K562 (cell line): ENCODE measurements at regions of chr1 and their contacts with region 1.

Region 1: GRCh38 chr1:228275739-228276421 is 68.0 kb downstream of the OBSCN start:
- DNase-seq: peak; percentile 96 to 98 (median 98)
- ATAC-seq: peak; percentile 93
- H3K4me3 ChIP-seq: peak overlapping the region; percentile 54
- H3K27ac ChIP-seq: peak overlapping the region; percentile 57
- H3K4me1 ChIP-seq: peaks cover 5 to 80% of the 10 kb centered on the region in 2 experiments; a peak in 3 of 5 replicates
- H3K27me3 ChIP-seq: no peaks in the 10 kb centered on the region
- CTCF ChIP-seq: no peak
- EP300 ChIP-seq: no peak
- POLR2A ChIP-seq: peak; percentile 80
- RAD21 ChIP-seq: no peak

Region 2: DNA sequence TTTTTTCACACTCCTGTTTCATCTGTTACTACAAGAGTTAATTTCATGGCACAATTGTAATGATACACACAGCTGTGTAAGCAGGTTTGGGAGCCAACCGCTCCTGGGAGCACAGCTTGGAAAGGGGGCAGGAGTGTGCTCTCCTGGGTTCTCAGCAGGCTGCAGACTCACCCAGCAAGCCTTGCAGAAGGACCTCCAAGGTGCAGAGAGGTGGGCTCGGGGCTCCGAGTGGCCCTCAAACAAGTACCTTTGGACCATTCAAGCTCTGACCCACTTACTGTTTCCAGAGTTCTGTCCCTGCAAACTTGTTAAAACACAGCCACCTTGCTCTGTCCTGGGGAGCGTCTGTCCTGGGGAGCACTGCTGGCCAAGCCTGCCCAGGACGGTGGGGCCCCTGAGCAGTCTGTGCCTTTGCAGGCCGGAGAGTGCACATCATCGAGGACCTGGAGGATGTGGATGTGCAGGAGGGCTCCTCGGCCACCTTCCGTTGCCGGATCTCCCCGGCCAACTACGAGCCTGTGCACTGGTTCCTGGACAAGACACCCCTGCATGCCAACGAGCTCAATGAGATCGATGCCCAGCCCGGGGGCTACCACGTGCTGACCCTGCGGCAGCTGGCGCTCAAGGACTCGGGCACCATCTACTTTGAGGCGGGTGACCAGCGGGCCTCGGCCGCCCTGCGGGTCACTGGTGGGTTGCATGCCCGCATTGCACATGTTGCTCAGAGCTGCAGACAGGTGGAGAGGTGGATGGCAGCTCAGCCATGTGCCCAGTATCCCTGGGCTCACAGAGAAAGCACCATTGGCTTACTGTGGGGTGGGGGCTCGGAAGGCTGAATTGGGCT is 10.0 kb after region 1 on chr1:
- CTCF ChIA-PET with region 1: no interaction called
- POLR2A ChIA-PET with region 1: interaction called, 10 read pairs
- in situ Hi-C with region 1: no loop called
- intact Hi-C with region 1: no loop called
- DNase-seq: no peak
- ATAC-seq: no peak
- H3K4me3 ChIP-seq: no peak overlapping the region
- H3K27ac ChIP-seq: no peak overlapping the region
- H3K4me1 ChIP-seq: peaks cover 9 to 49% of the 10 kb centered on the region in 2 experiments; a peak in 4 of 5 replicates
- H3K27me3 ChIP-seq: peaks cover 27 to 35% of the 10 kb centered on the region in 2 experiments; a peak in 4 of 5 replicates
- CTCF ChIP-seq: no peak
- EP300 ChIP-seq: no peak
- POLR2A ChIP-seq: no peak
- RAD21 ChIP-seq: no peak